H1 (cell line): ENCODE measurements at regions of chr5 and their contacts with region 1.

Region 1: GRCh38 chr5:179821581-179822432 is 1.1 kb downstream of the SQSTM1 start:
- DNase-seq: peak in 1 of 2 experiments; percentile 80
- H3K4me3 ChIP-seq: peak overlapping the region; percentile 75 to 91 (median 83)
- H3K27ac ChIP-seq: peak overlapping the region; percentile 91; the same call in 1 of the 2 replicates
- H3K4me1 ChIP-seq: peaks cover 4 to 38% (median 33%) of the 10 kb centered on the region in 4 experiments
- H3K27me3 ChIP-seq: no peaks in the 10 kb centered on the region; a peak in 2 of 7 replicates
- CTCF ChIP-seq: 0 out of 4 replicates have a peak, but pooled peaks of 1 of the 3 experiments have one; percentile 11
- EP300 ChIP-seq: no peak
- POLR2A ChIP-seq: 0 out of 3 replicates have a peak, but pooled peaks of 1 of the 2 experiments have one; percentile 35
- RAD21 ChIP-seq: no peak

Region 2: GRCh38 chr5:179763215-179763945 is 58.4 kb before region 1 on chr5:
- CTCF ChIA-PET with region 1: interaction called, 11 read pairs
- POLR2A ChIA-PET with region 1: no interaction called
- DNase-seq: no peak
- H3K4me3 ChIP-seq: no peak overlapping the region
- H3K27ac ChIP-seq: no peak overlapping the region
- H3K4me1 ChIP-seq: peaks cover 3 to 19% (median 5%) of the 10 kb centered on the region in 4 experiments
- H3K27me3 ChIP-seq: no peaks in the 10 kb centered on the region
- CTCF ChIP-seq: peak; percentile 47 to 94 (median 89)
- EP300 ChIP-seq: no peak
- POLR2A ChIP-seq: no peak
- RAD21 ChIP-seq: peak; percentile 66 to 71

Region 3: DNA sequence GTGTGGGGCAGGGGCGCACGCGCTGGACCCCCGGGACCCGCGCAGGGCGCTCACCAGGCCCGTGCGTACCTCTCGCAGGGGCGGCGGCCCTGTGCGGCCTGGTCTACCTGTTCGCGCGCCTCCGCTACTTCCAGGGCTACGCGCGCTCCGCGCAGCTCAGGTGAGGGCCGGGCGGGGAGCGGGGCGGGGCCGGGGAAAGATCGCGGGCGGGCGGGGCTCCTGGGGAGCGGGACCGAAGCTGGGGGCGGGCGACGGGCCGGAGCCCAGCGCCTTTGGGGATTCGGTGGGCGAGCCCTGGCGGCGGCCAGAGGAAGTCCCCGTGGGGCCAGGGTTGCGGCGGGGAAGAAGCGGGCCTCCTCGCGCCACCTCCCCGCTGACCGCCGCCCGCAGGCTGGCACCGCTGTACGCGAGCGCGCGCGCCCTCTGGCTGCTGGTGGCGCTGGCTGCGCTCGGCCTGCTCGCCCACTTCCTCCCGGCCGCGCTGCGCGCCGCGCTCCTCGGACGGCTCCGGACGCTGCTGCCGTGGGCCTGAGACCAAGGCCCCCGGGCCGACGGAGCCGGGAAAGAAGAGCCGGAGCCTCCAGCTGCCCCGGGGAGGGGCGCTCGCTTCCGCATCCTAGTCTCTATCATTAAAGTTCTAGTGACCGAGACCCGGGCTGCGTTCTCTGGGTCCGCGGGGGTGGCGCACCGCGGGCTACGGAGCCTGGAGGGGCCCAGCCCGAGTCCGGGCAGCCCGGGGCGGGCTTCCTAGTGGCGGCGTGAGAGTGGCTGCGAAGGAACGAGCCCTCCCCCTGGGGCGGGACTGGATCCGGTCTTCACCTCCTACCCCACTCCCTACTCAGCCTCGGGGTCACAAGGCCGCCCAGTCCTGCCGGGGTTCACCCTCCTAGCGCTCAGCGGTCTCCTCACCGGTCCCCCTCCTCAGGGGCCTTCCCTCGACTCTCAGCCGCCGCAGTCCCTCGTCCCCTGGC is 25.7 kb before region 1 on chr5:
- CTCF ChIA-PET with region 1: interaction called, 6 read pairs
- POLR2A ChIA-PET with region 1: interaction called, 207 read pairs
- DNase-seq: peak in 1 of 2 experiments; percentile 85
- H3K4me3 ChIP-seq: peak overlapping the region; percentile 61 to 88 (median 64)
- H3K27ac ChIP-seq: no peak overlapping the region
- H3K4me1 ChIP-seq: peaks cover 0 to 14% (median 9%) of the 10 kb centered on the region in 4 experiments; a peak in 5 of 7 replicates
- H3K27me3 ChIP-seq: peaks cover 0 to 2% (median 0%) of the 10 kb centered on the region in 4 experiments; a peak in 1 of 7 replicates
- CTCF ChIP-seq: peak in 2 of 3 experiments; percentile 64 to 72; a peak in 3 of 4 replicates
- EP300 ChIP-seq: peak in 1 of 2 experiments; percentile 16; a peak in 1 of 3 replicates
- POLR2A ChIP-seq: peak in 1 of 2 experiments; percentile 44; a peak in 2 of 3 replicates
- RAD21 ChIP-seq: peak; percentile 35 to 64

Region 4: DNA sequence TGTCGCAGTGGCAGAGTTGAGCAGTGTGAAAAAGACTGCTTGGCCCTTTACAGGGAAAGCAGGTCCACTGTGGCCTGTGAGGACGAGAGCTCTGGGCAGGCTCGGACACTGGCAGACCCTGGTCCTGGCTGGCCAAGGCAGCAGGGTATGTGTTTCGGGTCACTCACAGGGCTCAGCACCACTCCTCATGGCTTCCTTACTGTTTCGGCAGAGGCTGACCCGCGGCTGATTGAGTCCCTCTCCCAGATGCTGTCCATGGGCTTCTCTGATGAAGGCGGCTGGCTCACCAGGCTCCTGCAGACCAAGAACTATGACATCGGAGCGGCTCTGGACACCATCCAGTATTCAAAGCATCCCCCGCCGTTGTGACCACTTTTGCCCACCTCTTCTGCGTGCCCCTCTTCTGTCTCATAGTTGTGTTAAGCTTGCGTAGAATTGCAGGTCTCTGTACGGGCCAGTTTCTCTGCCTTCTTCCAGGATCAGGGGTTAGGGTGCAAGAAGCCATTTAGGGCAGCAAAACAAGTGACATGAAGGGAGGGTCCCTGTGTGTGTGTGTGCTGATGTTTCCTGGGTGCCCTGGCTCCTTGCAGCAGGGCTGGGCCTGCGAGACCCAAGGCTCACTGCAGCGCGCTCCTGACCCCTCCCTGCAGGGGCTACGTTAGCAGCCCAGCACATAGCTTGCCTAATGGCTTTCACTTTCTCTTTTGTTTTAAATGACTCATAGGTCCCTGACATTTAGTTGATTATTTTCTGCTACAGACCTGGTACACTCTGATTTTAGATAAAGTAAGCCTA is 14.6 kb after region 1 on chr5:
- CTCF ChIA-PET with region 1: interaction called, 3 read pairs
- POLR2A ChIA-PET with region 1: interaction called, 31 read pairs
- DNase-seq: no peak
- H3K4me3 ChIP-seq: no peak overlapping the region
- H3K27ac ChIP-seq: no peak overlapping the region
- H3K4me1 ChIP-seq: no peaks in the 10 kb centered on the region
- H3K27me3 ChIP-seq: no peaks in the 10 kb centered on the region
- CTCF ChIP-seq: 0 out of 4 replicates have a peak, but pooled peaks of 1 of the 3 experiments have one; percentile 11
- EP300 ChIP-seq: no peak
- POLR2A ChIP-seq: peak; percentile 13 to 32; a peak in 1 of 3 replicates
- RAD21 ChIP-seq: peak in 1 of 2 experiments; percentile 14; a peak in 1 of 4 replicates

Region 5: GRCh38 chr5:179914032-179914755 is 92.4 kb after region 1 on chr5:
- CTCF ChIA-PET with region 1: no interaction called
- POLR2A ChIA-PET with region 1: no interaction called
- DNase-seq: no peak
- H3K4me3 ChIP-seq: no peak overlapping the region
- H3K27ac ChIP-seq: no peak overlapping the region
- H3K4me1 ChIP-seq: peaks cover 0 to 8% (median 3%) of the 10 kb centered on the region in 4 experiments; a peak in 6 of 7 replicates
- H3K27me3 ChIP-seq: no peaks in the 10 kb centered on the region; a peak in 1 of 7 replicates
- CTCF ChIP-seq: no peak
- EP300 ChIP-seq: no peak
- POLR2A ChIP-seq: no peak
- RAD21 ChIP-seq: no peak